BJ (cell line): ENCODE measurements at regions of chrX and their contacts with region 1.

Region 1: DNA sequence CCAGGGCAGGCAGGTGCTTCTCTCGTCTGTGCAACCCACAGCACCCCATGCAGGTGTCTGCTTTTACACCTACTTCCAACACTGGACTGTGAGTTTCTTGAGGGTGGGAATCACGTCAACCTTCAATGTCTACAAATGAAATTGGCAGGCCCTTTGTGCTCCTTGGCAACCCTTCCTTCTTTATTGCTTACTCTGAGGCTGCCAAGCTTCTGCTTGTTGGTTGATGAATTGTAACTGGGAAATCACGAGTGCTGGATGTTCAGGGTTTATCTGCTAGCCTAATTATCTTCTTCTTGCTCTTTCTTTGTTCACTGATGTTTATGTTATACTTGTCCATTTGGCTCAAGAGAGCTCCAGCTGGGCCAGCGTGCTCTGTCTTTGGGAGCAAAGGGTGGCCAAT is 2.5 kb upstream of the DGAT2L6 start:
- DNase-seq: no peak
- H3K4me3 ChIP-seq: no peak overlapping the region
- H3K27me3 ChIP-seq: no peaks in the 10 kb centered on the region
- CTCF ChIP-seq: no peak

Region 2: GRCh38 chrX:70234355-70234754 is 59.6 kb after region 1 on chrX and contains the start of gene AWAT1:
- CTCF ChIA-PET with region 1: no interaction called
- POLR2A ChIA-PET with region 1: interaction called, 17 read pairs
- DNase-seq: no peak
- H3K4me3 ChIP-seq: no peak within 1 kb of the TSS
- H3K27me3 ChIP-seq: peaks cover 1% of the 10 kb centered on the region; the same call in 1 of the 2 replicates
- CTCF ChIP-seq: no peak
- polyA plus RNA-seq, gene AWAT1: not detected in 2 replicates